ENCODE measurements at regions of chr22 and their contacts with region 1.

Region 1: GRCh38 chr22:17767233-17768065 is 6.8 kb downstream of the BID start:
- DNase-seq: peak; percentile 82
- H3K4me3 Mint-ChIP-seq: peak overlapping the region; percentile 3
- H3K27ac Mint-ChIP-seq: peak overlapping the region; percentile 18
- H3K4me1 Mint-ChIP-seq: peaks cover 40% of the 10 kb centered on the region
- H3K27me3 Mint-ChIP-seq: peaks cover 4% of the 10 kb centered on the region

Region 2: GRCh38 chr22:17665854-17666253 is 101.6 kb before region 1 on chr22:
- CTCF ChIA-PET with region 1: no interaction called
- POLR2A ChIA-PET with region 1: no interaction called
- intact Hi-C with region 1: no loop called
- DNase-seq: no peak
- H3K4me3 Mint-ChIP-seq: no peak overlapping the region
- H3K27ac Mint-ChIP-seq: no peak overlapping the region
- H3K4me1 Mint-ChIP-seq: peaks cover 9% of the 10 kb centered on the region
- H3K27me3 Mint-ChIP-seq: no peaks in the 10 kb centered on the region

Region 3: DNA sequence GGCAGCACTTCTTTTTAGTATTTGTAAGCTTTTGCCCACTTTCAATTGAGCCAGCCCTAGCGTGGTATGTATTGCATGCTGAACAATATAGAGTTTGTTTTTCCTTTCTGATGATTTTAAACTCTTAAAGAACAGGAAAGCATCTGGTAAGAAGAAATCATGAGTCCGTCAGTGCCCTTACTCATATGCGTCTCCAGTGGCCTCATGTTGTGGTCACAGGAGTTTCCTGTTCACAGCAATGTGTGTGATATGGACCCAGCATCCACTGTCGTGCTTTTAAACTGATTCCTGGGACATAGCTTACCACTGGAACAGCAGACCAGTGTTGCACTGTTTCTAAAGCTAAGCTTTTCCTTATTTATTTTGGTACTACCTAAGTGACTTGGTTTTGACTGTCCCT is 33.3 kb before region 1 on chr22:
- CTCF ChIA-PET with region 1: interaction called, 3 read pairs
- POLR2A ChIA-PET with region 1: no interaction called
- intact Hi-C with region 1: loop called (anchors 1 kb)
- DNase-seq: peak; percentile 65
- H3K4me3 Mint-ChIP-seq: no peak overlapping the region
- H3K27ac Mint-ChIP-seq: peak overlapping the region; percentile 19
- H3K4me1 Mint-ChIP-seq: peaks cover 15% of the 10 kb centered on the region
- H3K27me3 Mint-ChIP-seq: no peaks in the 10 kb centered on the region

Region 4: GRCh38 chr22:17779286-17780115 is 12.1 kb after region 1 on chr22:
- CTCF ChIA-PET with region 1: interaction called, 19 read pairs
- POLR2A ChIA-PET with region 1: interaction called, 13 read pairs
- intact Hi-C with region 1: loop called (anchors 1 kb)
- DNase-seq: peak; percentile 50
- H3K4me3 Mint-ChIP-seq: no peak overlapping the region
- H3K27ac Mint-ChIP-seq: no peak overlapping the region
- H3K4me1 Mint-ChIP-seq: peaks cover 70% of the 10 kb centered on the region
- H3K27me3 Mint-ChIP-seq: no peaks in the 10 kb centered on the region

Region 5: DNA sequence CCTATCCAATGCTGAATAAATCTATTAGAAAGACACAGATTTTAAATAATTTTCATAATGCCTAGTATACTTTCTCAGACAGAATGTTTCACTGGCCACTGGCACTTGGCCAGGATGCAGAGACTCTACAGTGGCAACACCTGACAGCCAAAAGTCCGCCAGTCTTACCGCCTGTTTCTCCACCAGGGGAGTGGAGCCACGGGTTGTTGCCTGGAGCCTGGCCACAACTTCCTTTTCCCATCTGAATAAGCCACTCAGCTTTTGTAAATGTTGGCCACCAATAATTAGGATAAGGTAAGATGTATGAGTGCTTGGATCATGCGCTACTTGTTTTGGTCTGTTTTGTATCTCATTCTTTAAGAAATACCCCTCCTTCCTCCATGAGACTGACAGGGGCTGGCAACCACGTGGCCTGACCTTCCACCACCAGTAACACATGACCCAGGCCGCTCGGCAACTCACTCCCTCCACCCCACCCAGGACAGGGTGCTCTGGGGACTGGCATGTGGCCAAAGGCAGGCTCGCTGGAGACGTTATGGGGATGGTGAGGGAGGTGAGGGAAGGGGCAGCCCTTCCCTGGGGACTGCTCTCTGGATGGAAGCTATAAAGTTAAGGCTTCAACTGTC is 99.8 kb after region 1 on chr22:
- CTCF ChIA-PET with region 1: no interaction called
- POLR2A ChIA-PET with region 1: no interaction called
- intact Hi-C with region 1: no loop called
- DNase-seq: no peak
- H3K4me3 Mint-ChIP-seq: no peak overlapping the region
- H3K27ac Mint-ChIP-seq: no peak overlapping the region
- H3K4me1 Mint-ChIP-seq: no peaks in the 10 kb centered on the region
- H3K27me3 Mint-ChIP-seq: no peaks in the 10 kb centered on the region

Region 6: DNA sequence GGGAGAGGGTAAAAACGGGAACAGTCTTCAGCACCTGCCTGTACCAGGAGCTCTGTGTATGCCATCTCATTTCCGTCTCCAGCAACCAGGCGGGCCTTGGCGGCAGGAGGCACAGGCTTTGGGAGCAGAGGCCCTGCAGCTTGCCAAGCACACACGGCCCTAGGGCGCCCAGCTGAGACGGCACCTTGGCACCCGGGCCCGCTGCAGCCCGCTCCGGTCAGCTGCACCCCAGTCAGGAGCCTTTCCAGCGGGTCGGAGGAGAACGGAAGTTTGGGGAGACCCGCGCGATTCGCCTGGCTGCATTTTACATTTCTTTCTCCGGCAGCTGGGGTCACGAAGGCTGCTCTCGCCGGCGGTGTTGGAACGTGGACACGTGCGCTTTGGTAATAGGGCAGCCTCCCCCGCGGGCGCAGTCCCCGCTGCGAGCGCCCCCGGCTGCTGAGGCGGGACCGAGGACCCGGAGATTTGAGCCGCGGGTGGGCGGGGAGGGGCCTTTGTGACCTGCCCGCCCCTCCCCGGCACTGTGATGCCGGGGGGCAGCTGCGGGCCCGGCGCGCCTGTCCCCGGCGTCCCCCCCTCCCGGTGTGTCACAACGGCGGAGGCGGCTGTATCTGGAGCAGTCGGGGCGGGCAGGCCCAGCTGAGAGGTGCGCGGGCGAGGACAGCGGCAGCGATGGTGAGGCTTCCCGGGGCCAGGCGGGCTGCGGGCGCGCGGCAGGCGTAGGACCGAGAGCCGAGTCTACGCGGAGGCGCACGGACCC is 342.9 kb after region 1 on chr22 and contains the start of gene TUBA8:
- CTCF ChIA-PET with region 1: no interaction called
- POLR2A ChIA-PET with region 1: no interaction called
- intact Hi-C with region 1: loop called (anchors 5 kb)
- DNase-seq: peak; percentile 59
- H3K4me3 Mint-ChIP-seq: peak within 1 kb of the TSS; percentile 61
- H3K27ac Mint-ChIP-seq: no peak within 1 kb of the TSS
- H3K4me1 Mint-ChIP-seq: peaks cover 46% of the 10 kb centered on the region
- H3K27me3 Mint-ChIP-seq: peaks cover 22% of the 10 kb centered on the region
- total RNA-seq, gene TUBA8: 3.3 to 4.3 TPM

Measured in activated CD4-positive, alpha-beta memory T cell treated with anti-CD3 and anti-CD28 coated beads for 36 hours (primary cell).